ENCODE measurements at regions of chr7 and their contacts with region 1.

Region 1: GRCh38 chr7:137656227-137656849 is 190.4 kb downstream of the DGKI start:
- DNase-seq: peak; percentile 74
- H3K4me3 ChIP-seq: peak overlapping the region in 1 of 2 experiments; percentile 20; a peak in 1 of 4 replicates
- H3K27ac ChIP-seq: peak overlapping the region; percentile 55 to 92
- H3K4me1 ChIP-seq: peaks cover 26 to 27% of the 10 kb centered on the region in 2 experiments
- H3K27me3 ChIP-seq: no peaks in the 10 kb centered on the region
- CTCF ChIP-seq: peak; percentile 99
- EP300 ChIP-seq: no peak
- RAD21 ChIP-seq: peak; percentile 99

Region 2: GRCh38 chr7:137399827-137400823 is 256.2 kb before region 1 on chr7:
- CTCF ChIA-PET with region 1: no interaction called
- POLR2A ChIA-PET with region 1: no interaction called
- DNase-seq: no peak
- H3K4me3 ChIP-seq: no peak overlapping the region
- H3K27ac ChIP-seq: no peak overlapping the region
- H3K4me1 ChIP-seq: peaks cover 0 to 5% of the 10 kb centered on the region in 2 experiments; a peak in 1 of 4 replicates
- H3K27me3 ChIP-seq: no peaks in the 10 kb centered on the region
- CTCF ChIP-seq: no peak
- EP300 ChIP-seq: no peak
- RAD21 ChIP-seq: no peak

Region 3: DNA sequence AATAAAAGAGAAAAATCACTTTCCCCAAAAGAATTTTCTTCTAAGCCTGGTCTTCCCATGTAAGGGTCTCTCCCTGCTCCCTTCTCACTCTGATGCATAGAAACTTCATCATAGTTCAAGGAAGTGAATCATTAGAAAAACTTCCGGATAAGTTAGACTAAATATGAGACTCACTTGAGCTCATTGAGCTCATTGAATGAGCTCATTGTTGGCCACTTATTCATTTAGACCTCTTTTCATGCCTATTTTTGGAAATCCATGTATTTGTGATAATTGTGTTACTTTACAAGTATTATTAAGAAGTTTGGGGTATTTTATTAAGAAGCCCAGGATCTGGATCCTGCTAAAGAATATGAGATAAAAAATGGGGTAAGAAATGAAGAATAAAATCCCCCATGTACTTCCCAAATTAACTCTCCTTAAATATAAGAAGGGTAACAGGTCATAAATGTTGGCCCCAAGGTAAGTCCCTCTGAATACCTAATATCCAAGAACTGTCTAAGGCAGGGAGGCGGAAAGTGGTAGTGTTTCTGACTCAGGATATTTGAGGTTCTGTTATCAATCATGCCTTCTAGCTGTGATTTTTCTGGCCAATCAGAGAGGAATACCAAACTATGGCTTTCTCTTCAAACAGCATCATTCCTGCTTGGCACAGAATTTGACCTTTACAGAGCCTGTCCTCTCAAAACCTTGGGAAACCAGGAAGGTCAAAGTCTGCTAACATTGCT is 76.3 kb before region 1 on chr7:
- CTCF ChIA-PET with region 1: no interaction called
- POLR2A ChIA-PET with region 1: no interaction called
- DNase-seq: no peak
- H3K4me3 ChIP-seq: no peak overlapping the region; a peak in 1 of 4 replicates
- H3K27ac ChIP-seq: peak overlapping the region in 1 of 2 experiments; percentile 96; a peak in 2 of 4 replicates
- H3K4me1 ChIP-seq: peaks cover 2 to 22% of the 10 kb centered on the region in 2 experiments; a peak in 2 of 4 replicates
- H3K27me3 ChIP-seq: no peaks in the 10 kb centered on the region
- CTCF ChIP-seq: no peak
- EP300 ChIP-seq: peak in 1 of 2 experiments; percentile 86; a peak in 2 of 4 replicates
- RAD21 ChIP-seq: no peak

Region 4: DNA sequence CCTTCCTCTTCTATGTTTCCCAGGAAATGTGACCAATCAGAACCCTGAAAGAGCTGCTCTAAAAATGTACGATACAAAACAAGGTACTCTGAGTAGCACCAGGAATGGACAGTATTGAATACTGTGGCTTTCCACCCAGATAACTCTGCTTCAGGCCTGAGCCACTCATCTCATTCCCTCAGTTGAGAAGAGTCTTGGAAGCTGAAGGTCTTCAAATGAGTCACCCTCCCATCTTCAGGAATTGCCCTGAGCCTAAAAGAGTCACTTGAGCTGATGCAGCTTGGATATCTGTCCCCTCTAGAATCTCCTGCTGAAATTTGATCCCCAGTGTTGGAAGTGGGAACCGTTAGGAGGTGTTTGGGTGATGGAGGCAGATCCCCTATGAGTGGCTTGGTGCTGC is 20.0 kb before region 1 on chr7:
- CTCF ChIA-PET with region 1: interaction called, 18 read pairs
- POLR2A ChIA-PET with region 1: no interaction called
- DNase-seq: no peak
- H3K4me3 ChIP-seq: no peak overlapping the region
- H3K27ac ChIP-seq: no peak overlapping the region
- H3K4me1 ChIP-seq: no peaks in the 10 kb centered on the region
- H3K27me3 ChIP-seq: no peaks in the 10 kb centered on the region
- CTCF ChIP-seq: no peak
- EP300 ChIP-seq: no peak
- RAD21 ChIP-seq: no peak

Region 5: DNA sequence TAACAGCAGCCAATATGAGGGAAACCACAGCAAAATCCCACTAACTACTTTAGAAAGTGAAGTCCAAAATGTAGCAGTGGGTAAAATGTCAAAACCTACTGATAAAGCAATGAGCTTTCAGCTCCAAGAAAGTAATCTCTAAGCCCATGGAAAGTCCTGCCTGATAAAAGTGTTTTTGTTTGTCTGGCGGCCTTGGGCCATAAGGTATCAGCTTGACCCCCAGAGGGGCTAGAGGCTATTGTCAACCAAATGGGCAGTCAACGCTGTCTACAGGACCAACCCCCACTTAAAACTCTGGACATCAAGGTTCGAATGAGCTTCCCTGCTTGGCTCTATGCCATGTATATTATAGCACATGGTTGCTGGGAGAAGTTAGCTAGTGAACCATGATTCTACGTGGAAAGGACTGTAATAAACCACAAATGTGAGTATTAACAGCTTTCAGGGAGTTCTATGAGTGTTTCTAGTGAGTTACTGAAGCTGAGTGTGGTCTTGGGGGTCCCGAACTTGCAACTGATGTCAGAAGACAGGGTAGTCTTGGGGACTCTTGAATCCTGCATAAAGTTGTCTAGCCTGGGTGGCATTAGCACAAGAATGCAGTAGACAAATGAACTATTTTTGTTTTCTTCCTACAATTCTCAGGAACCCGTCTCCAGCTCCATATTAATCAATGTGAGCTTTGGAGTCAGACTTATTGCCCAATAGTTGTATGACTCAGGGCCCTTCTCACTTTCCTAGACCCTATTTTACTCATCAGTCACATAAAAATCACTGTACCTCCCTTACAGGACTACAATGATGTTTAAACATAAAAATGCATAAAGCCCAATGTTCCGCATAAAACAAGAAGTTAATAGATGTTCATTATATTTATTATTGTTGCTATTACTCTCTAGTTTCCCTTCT is 25.6 kb after region 1 on chr7:
- CTCF ChIA-PET with region 1: interaction called, 12 read pairs
- POLR2A ChIA-PET with region 1: no interaction called
- DNase-seq: no peak
- H3K4me3 ChIP-seq: no peak overlapping the region
- H3K27ac ChIP-seq: peak overlapping the region in 1 of 2 experiments; percentile 81; a peak in 2 of 4 replicates
- H3K4me1 ChIP-seq: peaks cover 17 to 33% of the 10 kb centered on the region in 2 experiments; a peak in 3 of 4 replicates
- H3K27me3 ChIP-seq: no peaks in the 10 kb centered on the region
- CTCF ChIP-seq: no peak
- EP300 ChIP-seq: peak in 1 of 2 experiments; percentile 34; a peak in 1 of 4 replicates
- RAD21 ChIP-seq: no peak

Region 6: GRCh38 chr7:137846827-137847567 is 190.7 kb after region 1 on chr7 and contains the start of gene DGKI:
- CTCF ChIA-PET with region 1: interaction called, 27 read pairs
- POLR2A ChIA-PET with region 1: interaction called, 14 read pairs
- DNase-seq: peak; percentile 99
- H3K4me3 ChIP-seq: peak within 1 kb of the TSS; percentile 72 to 82
- H3K27ac ChIP-seq: peak within 1 kb of the TSS in 1 of 2 experiments; percentile 87; a peak in 2 of 4 replicates
- H3K4me1 ChIP-seq: peaks cover 14 to 30% of the 10 kb centered on the region in 2 experiments; a peak in 3 of 4 replicates
- H3K27me3 ChIP-seq: no peaks in the 10 kb centered on the region
- CTCF ChIP-seq: no peak
- EP300 ChIP-seq: 0 out of 4 replicates have a peak, but pooled peaks of 1 of the 2 experiments have one; percentile 6
- RAD21 ChIP-seq: peak; percentile 6; the same call in 1 of the 2 replicates
- polyA plus RNA-seq, gene DGKI: 1.3 and 1.4 TPM in 2 replicates

Region 7: GRCh38 chr7:137882261-137882668 is 225.9 kb after region 1 on chr7:
- CTCF ChIA-PET with region 1: interaction called, 131 read pairs
- POLR2A ChIA-PET with region 1: no interaction called
- DNase-seq: peak; percentile 36
- H3K4me3 ChIP-seq: peak overlapping the region in 1 of 2 experiments; percentile 7; a peak in 1 of 4 replicates
- H3K27ac ChIP-seq: peak overlapping the region; percentile 65 to 96; a peak in 3 of 4 replicates
- H3K4me1 ChIP-seq: peaks cover 3 to 39% of the 10 kb centered on the region in 2 experiments; a peak in 3 of 4 replicates
- H3K27me3 ChIP-seq: no peaks in the 10 kb centered on the region
- CTCF ChIP-seq: no peak
- EP300 ChIP-seq: peak in 1 of 2 experiments; percentile 95; a peak in 2 of 4 replicates
- RAD21 ChIP-seq: no peak

Region 8: GRCh38 chr7:138002096-138002827 is 345.9 kb after region 1 on chr7:
- CTCF ChIA-PET with region 1: interaction called, 21 read pairs
- POLR2A ChIA-PET with region 1: no interaction called
- DNase-seq: peak; percentile 94
- H3K4me3 ChIP-seq: peak overlapping the region; percentile 84 to 93
- H3K27ac ChIP-seq: peak overlapping the region; percentile 88 to 90
- H3K4me1 ChIP-seq: peaks cover 14 to 25% of the 10 kb centered on the region in 2 experiments; a peak in 2 of 4 replicates
- H3K27me3 ChIP-seq: no peaks in the 10 kb centered on the region
- CTCF ChIP-seq: peak; percentile 100
- EP300 ChIP-seq: 0 out of 4 replicates have a peak, but pooled peaks of 1 of the 2 experiments have one; percentile 6
- RAD21 ChIP-seq: peak; percentile 72

Region 9: GRCh38 chr7:138417078-138417700 is 760.9 kb after region 1 on chr7:
- CTCF ChIA-PET with region 1: no interaction called
- POLR2A ChIA-PET with region 1: no interaction called
- DNase-seq: no peak
- H3K4me3 ChIP-seq: no peak overlapping the region
- H3K27ac ChIP-seq: no peak overlapping the region
- H3K4me1 ChIP-seq: no peaks in the 10 kb centered on the region
- H3K27me3 ChIP-seq: no peaks in the 10 kb centered on the region
- CTCF ChIP-seq: no peak
- EP300 ChIP-seq: no peak
- RAD21 ChIP-seq: no peak

Region 10: DNA sequence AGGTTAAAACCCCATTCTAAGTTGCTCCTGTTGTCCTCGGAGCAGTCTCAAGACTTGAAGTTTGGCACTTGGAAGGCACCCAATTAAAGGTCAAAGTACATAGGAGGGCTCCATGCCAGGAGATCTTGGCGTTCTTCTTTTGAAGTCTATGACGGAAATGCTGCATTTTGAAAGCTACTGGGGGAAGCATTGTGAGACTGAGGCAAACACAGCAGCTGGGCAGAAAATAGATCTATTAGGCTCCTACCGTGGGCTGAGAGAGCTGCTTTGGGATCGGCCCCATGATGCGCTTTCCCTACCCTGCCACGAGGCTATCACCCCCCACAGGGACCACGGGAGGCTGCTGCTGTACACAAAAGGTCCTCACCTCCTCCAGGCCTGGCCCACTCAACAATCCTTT is 1304.8 kb after region 1 on chr7:
- CTCF ChIA-PET with region 1: no interaction called
- POLR2A ChIA-PET with region 1: no interaction called
- DNase-seq: no peak
- H3K4me3 ChIP-seq: no peak overlapping the region
- H3K27ac ChIP-seq: no peak overlapping the region
- H3K4me1 ChIP-seq: peaks cover 0 to 5% of the 10 kb centered on the region in 2 experiments; a peak in 1 of 4 replicates
- H3K27me3 ChIP-seq: no peaks in the 10 kb centered on the region
- CTCF ChIP-seq: no peak
- EP300 ChIP-seq: no peak
- RAD21 ChIP-seq: no peak

Measured in SK-N-SH (cell line).